ENCODE measurements at regions of chr2 and their contacts with region 1.

Region 1: GRCh38 chr2:149597668-149598326 is 10.2 kb upstream of the MMADHC start:
- DNase-seq: no peak
- ATAC-seq: peak; percentile 94
- H3K4me3 Mint-ChIP-seq: peak overlapping the region; percentile 3
- H3K27ac Mint-ChIP-seq: no peak overlapping the region
- H3K4me1 Mint-ChIP-seq: peaks cover 8% of the 10 kb centered on the region
- H3K27me3 Mint-ChIP-seq: peaks cover 5% of the 10 kb centered on the region
- CTCF ChIP-seq: peak; percentile 55

Region 2: DNA sequence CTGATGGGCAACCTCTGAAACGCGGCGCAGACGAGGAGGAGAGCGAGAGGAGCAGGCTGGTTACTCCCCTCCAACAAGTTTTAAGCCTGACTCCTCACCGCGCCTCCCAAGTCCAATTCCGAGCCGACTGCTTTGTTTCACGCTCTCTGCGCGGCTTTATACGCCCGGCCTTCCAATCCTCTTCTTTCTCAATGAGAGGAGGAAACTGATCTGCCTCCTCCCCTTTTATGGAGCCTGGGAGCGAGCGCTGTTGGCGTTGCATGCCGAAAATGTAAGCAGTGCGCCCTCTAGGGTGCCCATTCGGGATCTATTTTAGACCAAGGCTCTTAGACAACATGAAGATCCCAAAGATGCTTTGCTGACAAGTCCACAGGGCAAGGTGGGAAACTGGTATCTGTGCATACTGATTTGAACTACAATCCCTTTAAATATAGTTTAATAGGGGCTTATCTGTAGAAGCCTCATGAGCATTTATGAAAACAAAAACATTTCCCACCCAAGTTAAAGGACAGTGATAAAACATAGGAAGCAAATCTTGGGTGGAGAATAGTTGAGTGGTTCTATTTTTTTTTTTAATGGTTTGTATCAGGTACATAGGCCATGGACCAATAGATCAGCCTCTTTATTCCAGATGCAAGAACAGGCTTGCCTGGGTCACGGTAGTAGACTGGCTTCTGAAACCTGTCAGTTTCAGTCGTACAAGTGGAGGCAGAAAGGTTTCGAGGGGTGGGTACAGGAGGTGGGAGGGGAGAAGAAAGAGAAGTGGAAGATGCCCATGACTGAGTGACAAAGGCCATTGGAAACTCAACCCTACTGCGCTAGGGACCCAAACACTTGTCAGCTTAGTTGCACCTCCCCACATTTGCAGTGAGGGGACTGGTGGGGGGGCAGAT is 890.0 kb after region 1 on chr2 and contains the start of gene RND3:
- CTCF ChIA-PET with region 1: no interaction called
- POLR2A ChIA-PET with region 1: no interaction called
- intact Hi-C with region 1: loop called (anchors 2 kb)
- DNase-seq: no peak
- ATAC-seq: no peak
- H3K4me3 Mint-ChIP-seq: no peak within 1 kb of the TSS
- H3K27ac Mint-ChIP-seq: no peak within 1 kb of the TSS
- H3K4me1 Mint-ChIP-seq: peaks cover 10% of the 10 kb centered on the region
- H3K27me3 Mint-ChIP-seq: peaks cover 53% of the 10 kb centered on the region
- CTCF ChIP-seq: no peak
- total RNA-seq, gene RND3: not detected in 2 replicates

Region 3: DNA sequence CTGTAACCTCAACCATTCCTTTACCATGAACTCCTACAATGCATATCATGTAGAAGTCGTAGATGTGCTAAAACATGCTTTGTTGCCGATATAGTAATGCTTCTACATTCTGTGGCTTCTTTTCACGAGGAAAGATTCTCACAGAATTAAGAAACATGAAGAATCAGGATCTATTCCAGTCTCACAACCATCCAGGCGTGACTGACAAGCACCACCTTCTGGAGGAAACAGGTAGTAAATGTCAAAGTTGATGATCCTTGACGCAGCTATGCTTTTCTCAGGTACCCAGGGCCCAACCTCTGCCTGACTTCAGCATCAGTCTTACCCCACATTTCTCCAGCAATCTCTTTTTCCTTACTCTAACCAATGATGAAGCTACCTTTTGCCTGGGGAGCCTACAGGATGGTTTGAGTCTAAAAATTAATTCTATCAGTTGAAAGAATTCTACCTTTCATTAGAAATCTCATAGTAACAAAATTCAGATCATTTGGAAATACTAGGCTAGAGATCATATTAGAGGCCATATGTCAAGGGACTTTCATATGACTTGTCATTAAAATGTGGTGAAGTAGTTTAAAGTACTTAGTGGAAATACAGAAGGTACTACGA is 1013.0 kb after region 1 on chr2:
- CTCF ChIA-PET with region 1: no interaction called
- POLR2A ChIA-PET with region 1: no interaction called
- intact Hi-C with region 1: loop called (anchors 5 kb)
- DNase-seq: no peak
- ATAC-seq: no peak
- H3K4me3 Mint-ChIP-seq: no peak overlapping the region
- H3K27ac Mint-ChIP-seq: no peak overlapping the region
- H3K4me1 Mint-ChIP-seq: no peaks in the 10 kb centered on the region
- H3K27me3 Mint-ChIP-seq: no peaks in the 10 kb centered on the region
- CTCF ChIP-seq: no peak

Region 4: GRCh38 chr2:151051574-151052220 is 1453.9 kb after region 1 on chr2:
- CTCF ChIA-PET with region 1: interaction called, 52 read pairs
- POLR2A ChIA-PET with region 1: no interaction called
- intact Hi-C with region 1: loop called (anchors 1 kb)
- DNase-seq: no peak
- ATAC-seq: peak; percentile 71
- H3K4me3 Mint-ChIP-seq: no peak overlapping the region
- H3K27ac Mint-ChIP-seq: no peak overlapping the region
- H3K4me1 Mint-ChIP-seq: no peaks in the 10 kb centered on the region
- H3K27me3 Mint-ChIP-seq: no peaks in the 10 kb centered on the region
- CTCF ChIP-seq: no peak

Region 5: DNA sequence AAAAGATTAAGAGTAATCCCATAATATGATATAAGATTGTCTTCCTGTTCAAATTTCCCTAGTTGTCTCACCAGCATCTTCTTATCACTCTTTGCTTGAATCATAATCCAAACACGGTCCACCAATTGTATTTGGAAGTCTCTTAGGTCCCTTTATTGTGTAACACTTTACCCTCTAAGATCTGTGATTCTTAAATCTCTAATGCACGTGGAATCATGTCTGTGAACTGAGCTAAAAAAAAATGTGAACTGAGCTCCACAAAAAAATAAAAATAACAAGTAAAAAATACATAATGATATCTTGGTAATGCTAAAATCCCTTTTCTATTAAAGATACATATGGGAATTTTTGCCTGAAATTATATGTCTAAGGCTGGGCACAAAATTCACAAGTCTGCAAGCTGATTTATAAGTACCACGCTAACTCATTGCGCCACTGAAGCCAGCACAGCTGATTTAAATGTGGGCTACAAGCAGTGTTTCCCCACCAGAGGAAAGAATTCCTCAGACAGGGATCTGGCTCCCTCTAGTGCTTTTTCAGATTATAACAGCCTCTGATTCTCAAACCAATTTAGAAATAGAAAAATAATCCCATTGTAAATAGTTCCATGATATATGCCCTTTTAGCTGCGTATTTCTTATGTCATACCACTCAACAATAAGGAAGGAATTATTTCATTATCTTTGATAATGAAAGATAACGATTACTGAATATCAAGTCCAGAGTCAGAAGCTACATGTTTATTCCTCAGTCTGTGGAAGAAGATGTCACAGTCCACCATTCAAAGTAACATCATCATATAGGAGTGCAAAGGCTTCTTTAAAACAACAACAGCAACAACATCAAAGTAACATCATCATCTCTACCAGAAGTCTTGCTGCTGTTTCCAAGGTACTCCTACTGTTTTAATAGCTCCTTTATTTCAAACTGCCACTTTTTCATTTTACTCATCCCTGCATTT is 1641.0 kb after region 1 on chr2:
- CTCF ChIA-PET with region 1: interaction called, 25 read pairs
- POLR2A ChIA-PET with region 1: no interaction called
- intact Hi-C with region 1: loop called (anchors 1 kb)
- DNase-seq: no peak
- ATAC-seq: peak; percentile 72
- H3K4me3 Mint-ChIP-seq: no peak overlapping the region
- H3K27ac Mint-ChIP-seq: no peak overlapping the region
- H3K4me1 Mint-ChIP-seq: no peaks in the 10 kb centered on the region
- H3K27me3 Mint-ChIP-seq: peaks cover 6% of the 10 kb centered on the region
- CTCF ChIP-seq: no peak

Region 6: GRCh38 chr2:151437630-151438029 is 1839.8 kb after region 1 on chr2:
- CTCF ChIA-PET with region 1: no interaction called
- POLR2A ChIA-PET with region 1: no interaction called
- intact Hi-C with region 1: loop called (anchors 2 kb)
- DNase-seq: no peak
- ATAC-seq: peak; percentile 37
- H3K4me3 Mint-ChIP-seq: no peak overlapping the region
- H3K27ac Mint-ChIP-seq: no peak overlapping the region
- H3K4me1 Mint-ChIP-seq: no peaks in the 10 kb centered on the region
- H3K27me3 Mint-ChIP-seq: no peaks in the 10 kb centered on the region
- CTCF ChIP-seq: peak; percentile 46